A673 (cell line): ENCODE measurements at regions of chr4 and their contacts with region 1.

Region 1: GRCh38 chr4:10582059-10582686 is 102.4 kb downstream of the CLNK start:
- DNase-seq: peak; percentile 14
- H3K4me3 ChIP-seq: no peak overlapping the region
- H3K27ac ChIP-seq: no peak overlapping the region
- H3K4me1 ChIP-seq: no peaks in the 10 kb centered on the region
- H3K27me3 ChIP-seq: no peaks in the 10 kb centered on the region
- CTCF ChIP-seq: peak; percentile 67

Region 2: GRCh38 chr4:11424000-11424399 is 841.8 kb after region 1 on chr4:
- CTCF ChIA-PET with region 1: no interaction called
- POLR2A ChIA-PET with region 1: no interaction called
- intact Hi-C with region 1: loop called (anchors 5 kb)
- DNase-seq: peak; percentile 6
- H3K4me3 ChIP-seq: no peak overlapping the region
- H3K27ac ChIP-seq: no peak overlapping the region
- H3K4me1 ChIP-seq: no peaks in the 10 kb centered on the region
- H3K27me3 ChIP-seq: no peaks in the 10 kb centered on the region
- CTCF ChIP-seq: 0 out of 2 replicates have a peak, but pooled peaks have one; percentile 28